CD14-positive monocyte (primary cell): ENCODE measurements at regions of chr20 and their contacts with region 1.

Region 1: GRCh38 chr20:62616728-62617621 is 25.3 kb upstream of the SLCO4A1 start:
- DNase-seq: peak; percentile 73 to 85 (median 83)
- H3K4me3 ChIP-seq: peak overlapping the region in 1 of 3 experiments; percentile 34
- H3K4me3 Mint-ChIP-seq: peak overlapping the region in 1 of 2 donors; percentile 71
- H3K27ac ChIP-seq: peak overlapping the region; percentile 93
- H3K27ac Mint-ChIP-seq: peak overlapping the region; percentile 94 to 98 (median 95)
- H3K4me1 ChIP-seq: peaks cover 31 to 34% of the 10 kb centered on the region in 2 donors
- H3K4me1 Mint-ChIP-seq: peaks cover 35% of the 10 kb centered on the region
- H3K27me3 ChIP-seq: no peaks in the 10 kb centered on the region
- H3K27me3 Mint-ChIP-seq: peaks cover 0 to 1% (median 0%) of the 10 kb centered on the region in 3 donors
- CTCF ChIP-seq: peak; percentile 97

Region 2: DNA sequence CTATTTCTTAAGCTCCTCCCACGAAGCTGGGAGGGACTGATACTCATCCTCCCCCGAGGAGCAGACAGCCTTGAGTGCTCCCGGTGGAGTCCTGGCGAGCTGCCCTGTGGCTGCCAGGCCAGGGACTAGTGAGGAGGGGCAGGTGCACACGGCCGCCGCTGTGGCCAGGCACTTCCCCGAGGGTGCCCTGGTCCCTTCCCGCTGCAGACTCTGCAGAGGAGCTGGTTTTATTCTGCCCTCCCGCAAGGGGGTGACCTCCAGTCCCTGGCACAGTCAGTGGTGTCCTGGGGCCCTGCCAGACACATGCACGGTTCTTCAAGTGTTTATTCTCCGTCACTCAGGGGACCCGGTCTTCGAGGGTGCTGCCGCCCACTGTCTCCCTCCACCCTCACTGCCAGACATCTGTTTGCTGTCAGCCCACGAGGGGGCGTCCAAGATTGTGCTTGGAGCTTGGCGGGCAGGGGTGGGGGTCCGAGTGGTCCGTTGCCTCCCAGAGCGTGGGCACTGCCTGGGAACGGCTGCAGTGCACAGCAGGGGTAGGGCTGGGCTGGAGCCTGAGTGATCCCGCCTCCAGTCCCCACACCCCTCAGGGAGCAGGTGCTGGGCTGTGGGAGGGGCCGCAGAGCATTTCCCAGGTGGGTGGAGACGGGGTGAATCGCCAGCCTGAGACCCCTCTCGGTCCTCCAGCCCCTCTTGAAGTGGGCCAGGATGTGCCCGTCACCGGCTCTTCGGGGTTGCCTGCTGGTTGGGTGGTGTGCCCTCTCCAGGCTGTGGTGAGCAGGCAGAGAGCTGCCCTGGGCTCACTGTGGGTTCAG is 206.8 kb before region 1 on chr20:
- intact Hi-C with region 1: no loop called
- DNase-seq: peak in 1 of 3 donors; percentile 22
- H3K4me3 ChIP-seq: no peak overlapping the region
- H3K4me3 Mint-ChIP-seq: no peak overlapping the region
- H3K27ac ChIP-seq: no peak overlapping the region
- H3K27ac Mint-ChIP-seq: no peak overlapping the region
- H3K4me1 ChIP-seq: peaks cover 29 to 36% of the 10 kb centered on the region in 2 donors
- H3K4me1 Mint-ChIP-seq: peaks cover 28% of the 10 kb centered on the region
- H3K27me3 ChIP-seq: peaks cover 0 to 3% of the 10 kb centered on the region in 2 donors
- H3K27me3 Mint-ChIP-seq: peaks cover 12 to 17% (median 13%) of the 10 kb centered on the region in 3 donors
- CTCF ChIP-seq: peak; percentile 52

Region 3: GRCh38 chr20:62500237-62500864 is 116.6 kb before region 1 on chr20:
- intact Hi-C with region 1: loop called (anchors 1 to 5 kb)
- DNase-seq: peak; percentile 65 to 83 (median 72)
- H3K4me3 ChIP-seq: no peak overlapping the region
- H3K4me3 Mint-ChIP-seq: peak overlapping the region in 1 of 2 donors; percentile 2
- H3K27ac ChIP-seq: no peak overlapping the region
- H3K27ac Mint-ChIP-seq: peak overlapping the region; percentile 12 to 85 (median 51)
- H3K4me1 ChIP-seq: peaks cover 3 to 14% of the 10 kb centered on the region in 2 donors
- H3K4me1 Mint-ChIP-seq: peaks cover 20% of the 10 kb centered on the region
- H3K27me3 ChIP-seq: peaks cover 0 to 3% of the 10 kb centered on the region in 2 donors
- H3K27me3 Mint-ChIP-seq: peaks cover 6 to 8% (median 6%) of the 10 kb centered on the region in 3 donors
- CTCF ChIP-seq: peak; percentile 80

Region 4: GRCh38 chr20:62786157-62786556 is 169.2 kb after region 1 on chr20:
- intact Hi-C with region 1: loop called in 1 of 2 experiments (anchors 2 kb)
- DNase-seq: no peak
- H3K4me3 ChIP-seq: no peak overlapping the region
- H3K4me3 Mint-ChIP-seq: no peak overlapping the region
- H3K27ac ChIP-seq: peak overlapping the region in 1 of 2 donors; percentile 92
- H3K27ac Mint-ChIP-seq: peak overlapping the region in 4 of 7 donors; percentile 19 to 84 (median 81)
- H3K4me1 ChIP-seq: peaks cover 14 to 24% of the 10 kb centered on the region in 2 donors
- H3K4me1 Mint-ChIP-seq: peaks cover 28% of the 10 kb centered on the region
- H3K27me3 ChIP-seq: no peaks in the 10 kb centered on the region
- H3K27me3 Mint-ChIP-seq: peaks cover 1 to 6% (median 4%) of the 10 kb centered on the region in 3 donors
- CTCF ChIP-seq: no peak